Panc1 (cell line): ENCODE measurements at regions of chr1 and their contacts with region 1.

Region 1: GRCh38 chr1:50570066-50570468 is 146.8 kb upstream of the DMRTA2 start:
- DNase-seq: no peak
- ATAC-seq: no peak
- H3K4me3 ChIP-seq: no peak overlapping the region
- H3K27ac ChIP-seq: no peak overlapping the region
- H3K4me1 ChIP-seq: no peaks in the 10 kb centered on the region
- H3K27me3 ChIP-seq: no peaks in the 10 kb centered on the region
- CTCF ChIP-seq: no peak

Region 2: DNA sequence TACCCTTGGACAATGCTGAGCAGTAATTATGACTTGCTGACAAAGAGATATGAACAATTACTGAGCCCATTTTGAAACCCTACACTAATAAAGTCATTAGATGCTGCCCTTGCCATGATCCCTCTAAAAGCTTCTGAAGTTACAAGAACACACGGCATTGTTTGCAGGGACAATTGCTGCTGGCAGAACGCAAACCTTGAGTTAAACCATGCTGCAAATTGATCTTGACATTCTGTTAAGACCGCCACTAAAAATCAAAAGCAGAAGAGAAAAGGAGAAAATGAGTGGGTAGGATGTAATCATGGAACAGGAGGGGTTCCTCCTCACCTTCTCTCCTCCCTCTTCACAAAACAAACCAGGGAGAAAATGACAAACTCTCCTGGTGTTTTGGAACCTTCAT is 10.6 kb before region 1 on chr1:
- CTCF ChIA-PET with region 1: interaction called, 14 read pairs
- POLR2A ChIA-PET with region 1: no interaction called
- in situ Hi-C with region 1: no loop called
- intact Hi-C with region 1: no loop called
- DNase-seq: no peak
- ATAC-seq: no peak
- H3K4me3 ChIP-seq: no peak overlapping the region
- H3K27ac ChIP-seq: no peak overlapping the region
- H3K4me1 ChIP-seq: no peaks in the 10 kb centered on the region
- H3K27me3 ChIP-seq: no peaks in the 10 kb centered on the region
- CTCF ChIP-seq: no peak